Heart right ventricle (tissue), 16 donors: ENCODE measurements at regions of chr18 and their contacts with region 1.

Region 1: DNA sequence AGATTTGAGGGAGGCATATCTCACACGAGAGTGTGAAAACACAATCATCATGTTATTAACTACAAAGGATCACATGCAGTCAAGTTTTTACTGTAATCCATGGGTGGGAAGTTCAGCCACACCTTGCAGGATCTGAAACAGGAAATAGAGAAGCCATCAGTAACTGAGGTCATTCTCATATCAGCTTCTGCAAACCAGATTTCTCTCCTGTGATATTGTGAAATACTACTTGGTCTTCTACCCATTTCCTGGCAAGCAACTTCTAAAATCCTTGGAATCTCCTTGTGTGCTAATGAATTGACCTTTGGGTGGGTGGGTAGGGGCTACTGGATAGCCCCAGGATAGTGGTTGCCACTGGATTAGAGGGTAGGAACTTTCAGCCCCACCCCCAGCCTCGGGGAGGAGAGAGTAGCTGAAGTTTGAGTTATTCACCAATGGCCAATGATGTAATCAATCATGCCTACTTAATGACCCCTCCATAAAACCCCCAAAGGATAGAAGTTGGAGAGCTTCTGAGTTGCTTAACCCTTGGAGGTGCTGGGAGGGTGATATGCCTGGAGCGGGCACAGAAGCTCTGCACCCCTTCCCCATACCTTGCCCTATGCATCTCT is 25.6 kb upstream of the TGIF1 start:
- DNase-seq: no peak
- ATAC-seq: no peak
- H3K4me3 ChIP-seq: no peak overlapping the region
- H3K27ac ChIP-seq: no peak overlapping the region
- H3K4me1 ChIP-seq: no peaks in the 10 kb centered on the region
- H3K27me3 ChIP-seq: no peaks in the 10 kb centered on the region
- CTCF ChIP-seq: no peak

Region 2: GRCh38 chr18:3119401-3120335 is 304.7 kb before region 1 on chr18:
- intact Hi-C with region 1: no loop called
- DNase-seq: no peak
- ATAC-seq: no peak
- H3K4me3 ChIP-seq: no peak overlapping the region
- H3K27ac ChIP-seq: peak overlapping the region in 1 of 10 donors; percentile 4
- H3K4me1 ChIP-seq: peaks cover 0 to 13% (median 0%) of the 10 kb centered on the region in 9 donors
- H3K27me3 ChIP-seq: no peaks in the 10 kb centered on the region
- CTCF ChIP-seq: no peak

Region 3: GRCh38 chr18:3354506-3354905 is 69.9 kb before region 1 on chr18:
- intact Hi-C with region 1: no loop called
- DNase-seq: no peak
- ATAC-seq: no peak
- H3K4me3 ChIP-seq: no peak overlapping the region
- H3K27ac ChIP-seq: no peak overlapping the region
- H3K4me1 ChIP-seq: no peaks in the 10 kb centered on the region
- H3K27me3 ChIP-seq: peaks cover 0 to 5% (median 0%) of the 10 kb centered on the region in 7 donors
- CTCF ChIP-seq: no peak

Region 4: DNA sequence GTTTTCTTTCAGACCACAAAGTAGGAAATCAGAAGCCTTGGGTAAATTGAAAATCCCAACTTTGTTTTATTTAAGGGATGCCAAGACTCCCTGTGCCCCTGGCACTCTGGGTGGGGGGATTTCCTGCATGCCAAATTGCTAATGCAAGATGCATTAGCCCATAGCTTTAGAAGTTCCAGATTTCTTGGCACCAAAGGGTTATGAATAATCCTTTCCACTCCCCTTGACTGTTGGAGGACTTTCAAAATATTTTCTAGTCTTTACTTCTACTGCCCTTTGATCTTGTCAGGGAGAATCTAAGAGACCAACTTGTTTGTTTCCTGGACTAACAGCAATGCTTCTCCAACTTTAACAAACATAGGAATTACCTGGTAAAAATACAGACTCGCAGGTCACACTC is 56.2 kb before region 1 on chr18:
- intact Hi-C with region 1: loop called in 1 of 10 experiments (anchors 10 kb)
- DNase-seq: no peak
- ATAC-seq: no peak
- H3K4me3 ChIP-seq: no peak overlapping the region
- H3K27ac ChIP-seq: no peak overlapping the region
- H3K4me1 ChIP-seq: no peaks in the 10 kb centered on the region
- H3K27me3 ChIP-seq: no peaks in the 10 kb centered on the region
- CTCF ChIP-seq: no peak